Naive thymus-derived CD4-positive, alpha-beta T cell (primary cell): ENCODE measurements at regions of chr11 and their contacts with region 1.

Region 1: GRCh38 chr11:100855466-100856067 is 168.5 kb downstream of the ARHGAP42 start:
- DNase-seq: no peak
- ATAC-seq: no peak
- H3K4me3 ChIP-seq: no peak overlapping the region
- H3K4me3 Mint-ChIP-seq: no peak overlapping the region
- H3K27ac ChIP-seq: no peak overlapping the region
- H3K27ac Mint-ChIP-seq: no peak overlapping the region
- H3K4me1 ChIP-seq: no peaks in the 10 kb centered on the region
- H3K4me1 Mint-ChIP-seq: no peaks in the 10 kb centered on the region
- H3K27me3 ChIP-seq: no peaks in the 10 kb centered on the region
- H3K27me3 Mint-ChIP-seq: no peaks in the 10 kb centered on the region

Region 2: DNA sequence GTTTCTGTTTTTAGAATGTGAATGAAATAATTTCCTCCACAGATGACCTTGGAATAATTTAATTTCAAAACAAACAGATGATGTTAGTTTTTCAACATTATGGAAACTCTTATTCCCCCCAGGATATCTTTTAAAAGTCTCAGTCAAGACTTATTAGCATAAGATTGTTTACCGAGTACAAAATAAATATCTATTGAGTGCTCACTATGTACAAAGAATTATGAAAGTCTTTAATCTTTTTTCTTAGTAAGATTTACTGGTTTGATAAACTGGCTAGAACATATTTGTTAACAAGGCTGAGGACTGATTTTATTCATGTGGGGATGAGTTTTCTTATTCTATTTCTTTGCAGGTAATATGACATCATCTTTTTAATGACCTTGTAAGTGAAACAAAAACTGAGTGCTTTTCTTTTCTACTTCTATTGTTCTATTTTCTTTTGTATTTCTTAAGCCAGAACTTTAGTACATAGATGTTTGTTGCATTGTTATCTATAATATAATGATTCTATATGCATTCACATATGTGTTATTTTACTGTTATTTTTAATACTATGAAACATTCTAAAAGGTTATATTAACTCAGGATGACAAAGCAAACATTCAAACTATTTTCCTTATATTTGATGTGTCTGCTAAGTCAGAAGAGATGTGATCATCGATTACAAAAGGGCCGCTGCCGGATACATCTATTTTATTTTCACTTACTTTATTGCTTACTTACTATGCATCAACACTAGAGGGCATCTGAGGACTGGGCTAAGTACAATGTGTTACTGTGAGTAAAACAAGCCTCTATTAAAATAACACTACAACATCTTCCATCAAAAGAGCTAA is 279.5 kb before region 1 on chr11:
- CTCF ChIA-PET with region 1: no interaction called
- POLR2A ChIA-PET with region 1: no interaction called
- intact Hi-C with region 1: loop called in 1 of 2 experiments (anchors 1 kb)
- DNase-seq: no peak
- ATAC-seq: no peak
- H3K4me3 ChIP-seq: no peak overlapping the region
- H3K4me3 Mint-ChIP-seq: no peak overlapping the region
- H3K27ac ChIP-seq: no peak overlapping the region
- H3K27ac Mint-ChIP-seq: no peak overlapping the region
- H3K4me1 ChIP-seq: no peaks in the 10 kb centered on the region
- H3K4me1 Mint-ChIP-seq: no peaks in the 10 kb centered on the region
- H3K27me3 ChIP-seq: no peaks in the 10 kb centered on the region
- H3K27me3 Mint-ChIP-seq: peaks cover 0 to 5% (median 0%) of the 10 kb centered on the region in 5 donors

Region 3: GRCh38 chr11:100841711-100842407 is 13.7 kb before region 1 on chr11:
- CTCF ChIA-PET with region 1: no interaction called
- POLR2A ChIA-PET with region 1: no interaction called
- intact Hi-C with region 1: no loop called
- DNase-seq: no peak
- ATAC-seq: no peak
- H3K4me3 ChIP-seq: no peak overlapping the region
- H3K4me3 Mint-ChIP-seq: no peak overlapping the region
- H3K27ac ChIP-seq: no peak overlapping the region
- H3K27ac Mint-ChIP-seq: no peak overlapping the region
- H3K4me1 ChIP-seq: no peaks in the 10 kb centered on the region
- H3K4me1 Mint-ChIP-seq: no peaks in the 10 kb centered on the region
- H3K27me3 ChIP-seq: no peaks in the 10 kb centered on the region
- H3K27me3 Mint-ChIP-seq: no peaks in the 10 kb centered on the region

Region 4: GRCh38 chr11:100908746-100909145 is 53.2 kb after region 1 on chr11:
- CTCF ChIA-PET with region 1: no interaction called
- POLR2A ChIA-PET with region 1: no interaction called
- intact Hi-C with region 1: no loop called
- DNase-seq: no peak
- ATAC-seq: no peak
- H3K4me3 ChIP-seq: no peak overlapping the region
- H3K4me3 Mint-ChIP-seq: no peak overlapping the region
- H3K27ac ChIP-seq: no peak overlapping the region
- H3K27ac Mint-ChIP-seq: no peak overlapping the region
- H3K4me1 ChIP-seq: no peaks in the 10 kb centered on the region
- H3K4me1 Mint-ChIP-seq: no peaks in the 10 kb centered on the region
- H3K27me3 ChIP-seq: no peaks in the 10 kb centered on the region
- H3K27me3 Mint-ChIP-seq: peaks cover 0 to 3% (median 0%) of the 10 kb centered on the region in 5 donors